Activated T-helper 1 cell treated with anti-CD3 and anti-CD28 coated beads, Interleukin-12 subunit alpha, Interleukin-12 subunit beta, Interleukin-2, Interleukin-4 antibody, amounts not matched to agents 30 ng/mL and 10 ng/mL and 1 ng/mL, durations not matched to agents 14 hours and 24 hours and 36 hours (primary cell): ENCODE measurements at regions of chr1 and their contacts with region 1.

Region 1: DNA sequence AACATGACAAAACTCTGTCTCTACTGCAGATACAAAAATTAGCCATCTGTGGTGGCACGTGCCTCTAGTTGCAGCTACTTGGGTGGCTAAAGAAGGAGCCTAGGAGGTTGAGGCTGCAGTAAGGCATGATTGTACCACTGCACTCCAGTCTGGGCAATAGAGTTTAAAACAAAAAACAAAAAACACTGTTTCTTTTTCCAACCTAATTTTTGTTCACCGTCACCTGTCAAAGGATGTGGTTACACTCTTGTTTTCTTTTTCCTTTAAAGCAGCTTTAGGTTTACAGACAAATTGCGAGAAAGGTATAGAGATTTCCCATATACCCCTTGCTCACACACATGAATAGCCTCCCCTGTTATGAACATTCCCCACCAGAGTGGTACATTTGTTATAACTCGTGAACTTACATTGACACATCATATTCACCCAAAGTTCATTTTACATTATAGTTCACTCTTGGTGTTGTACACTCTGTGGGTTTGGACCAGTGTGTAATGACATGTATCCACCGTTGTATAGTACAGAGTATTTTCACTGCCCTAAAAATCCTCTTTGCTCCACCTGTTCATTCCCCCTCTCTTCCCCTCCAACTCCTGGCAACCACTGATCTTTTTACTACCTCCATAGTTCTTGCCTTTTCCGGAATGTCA is 26.2 kb downstream of the SMG7 start:
- DNase-seq: no peak
- H3K4me3 Mint-ChIP-seq: peak overlapping the region; percentile 60
- H3K27ac Mint-ChIP-seq: peak overlapping the region; percentile 77
- H3K4me1 Mint-ChIP-seq: peaks cover 67% of the 10 kb centered on the region
- H3K27me3 Mint-ChIP-seq: no peaks in the 10 kb centered on the region

Region 2: DNA sequence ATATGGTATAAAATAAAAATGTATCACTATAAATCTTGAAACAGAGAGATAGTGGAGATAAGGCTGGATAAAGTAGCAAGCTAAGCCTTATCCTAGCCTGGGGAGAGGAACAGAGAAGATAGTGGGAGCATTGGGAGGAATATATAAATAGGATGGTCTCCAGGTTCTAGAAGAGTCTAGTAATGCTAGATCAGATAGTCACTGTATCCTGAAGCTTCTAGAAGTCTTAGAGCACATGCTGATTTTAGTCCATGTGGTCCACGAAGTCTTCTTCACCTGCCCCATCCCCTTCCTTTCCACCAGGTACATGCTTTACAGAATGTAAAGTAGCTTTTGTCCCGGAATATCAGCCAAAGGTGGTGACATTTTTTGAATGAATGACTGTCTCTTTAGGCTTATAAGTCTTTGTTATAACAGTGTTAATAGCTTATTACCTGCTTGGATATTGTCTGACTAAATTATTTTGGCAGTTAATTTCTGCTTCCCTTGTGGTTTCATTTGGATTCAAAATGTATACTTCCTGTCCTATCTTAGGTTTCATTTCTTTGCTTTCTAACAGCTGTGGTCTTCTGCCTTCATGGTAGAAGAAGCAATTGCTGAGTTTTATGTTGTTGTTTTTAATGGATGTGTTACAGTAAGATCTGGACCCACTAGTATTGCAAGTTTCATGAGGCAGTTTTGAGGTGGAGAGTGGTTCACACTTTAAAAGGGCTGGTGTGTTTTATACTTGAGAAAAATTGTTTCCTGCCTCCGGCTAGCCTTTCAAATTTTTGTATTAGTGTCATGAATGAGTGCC is 20.3 kb before region 1 on chr1:
- intact Hi-C with region 1: loop called (anchors 2 kb)
- DNase-seq: no peak
- H3K4me3 Mint-ChIP-seq: peak overlapping the region; percentile 70
- H3K27ac Mint-ChIP-seq: peak overlapping the region; percentile 85
- H3K4me1 Mint-ChIP-seq: peaks cover 65% of the 10 kb centered on the region
- H3K27me3 Mint-ChIP-seq: no peaks in the 10 kb centered on the region

Region 3: GRCh38 chr1:183515018-183515689 is 16.7 kb after region 1 on chr1:
- intact Hi-C with region 1: loop called (anchors 2 kb)
- DNase-seq: no peak
- H3K4me3 Mint-ChIP-seq: no peak overlapping the region
- H3K27ac Mint-ChIP-seq: peak overlapping the region; percentile 52
- H3K4me1 Mint-ChIP-seq: peaks cover 40% of the 10 kb centered on the region
- H3K27me3 Mint-ChIP-seq: no peaks in the 10 kb centered on the region

Region 4: DNA sequence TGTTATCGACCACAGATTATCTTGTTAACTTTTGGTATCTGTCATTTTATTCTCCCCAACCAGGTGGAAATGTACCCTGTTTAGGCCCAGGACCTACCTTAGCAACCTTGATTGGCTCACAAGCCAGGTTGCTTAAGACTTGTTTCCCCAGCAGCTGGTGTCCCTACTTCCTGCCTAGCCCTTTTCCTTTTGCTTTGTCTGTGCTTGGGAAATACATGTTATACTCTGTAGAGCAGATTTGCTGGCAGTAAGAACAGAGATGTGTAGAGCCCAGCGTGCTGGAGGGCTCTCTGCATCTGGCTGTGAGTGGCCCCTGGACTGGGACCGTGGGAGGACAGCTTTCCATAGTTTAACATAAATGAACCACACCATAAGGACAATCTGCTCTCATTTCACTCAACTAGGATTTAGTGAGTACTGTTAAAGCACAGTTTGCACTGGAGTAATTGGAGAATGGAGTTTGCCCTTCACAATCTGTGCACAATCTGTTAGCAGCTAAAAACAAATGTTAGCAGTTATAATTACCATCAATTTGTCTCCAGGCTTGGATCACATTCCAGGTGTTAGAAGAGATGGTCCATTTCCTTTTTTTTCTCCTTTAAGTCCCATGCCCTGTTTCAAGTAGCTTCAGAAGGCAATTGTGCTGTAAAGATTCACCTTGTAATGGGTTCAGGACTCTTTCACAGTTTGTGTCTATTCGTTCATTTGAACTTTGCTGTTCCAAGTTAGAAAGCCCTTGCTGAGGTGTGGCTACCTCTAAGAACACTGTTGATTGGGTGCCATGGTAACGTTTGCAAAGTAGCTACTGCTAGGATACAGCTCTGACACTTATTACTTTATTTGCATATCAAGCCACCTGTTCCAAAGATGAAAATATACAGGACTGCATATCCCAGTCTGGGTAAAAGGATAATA is 154.3 kb after region 1 on chr1 and contains the start of gene APOBEC4:
- intact Hi-C with region 1: no loop called
- DNase-seq: no peak
- H3K4me3 Mint-ChIP-seq: peak within 1 kb of the TSS; percentile 51
- H3K27ac Mint-ChIP-seq: peak within 1 kb of the TSS; percentile 94
- H3K4me1 Mint-ChIP-seq: peaks cover 48% of the 10 kb centered on the region
- H3K27me3 Mint-ChIP-seq: no peaks in the 10 kb centered on the region
- total RNA-seq, gene APOBEC4: not detected in 2 replicates